ENCODE measurements at regions of chr22 and their contacts with region 1.

Region 1: DNA sequence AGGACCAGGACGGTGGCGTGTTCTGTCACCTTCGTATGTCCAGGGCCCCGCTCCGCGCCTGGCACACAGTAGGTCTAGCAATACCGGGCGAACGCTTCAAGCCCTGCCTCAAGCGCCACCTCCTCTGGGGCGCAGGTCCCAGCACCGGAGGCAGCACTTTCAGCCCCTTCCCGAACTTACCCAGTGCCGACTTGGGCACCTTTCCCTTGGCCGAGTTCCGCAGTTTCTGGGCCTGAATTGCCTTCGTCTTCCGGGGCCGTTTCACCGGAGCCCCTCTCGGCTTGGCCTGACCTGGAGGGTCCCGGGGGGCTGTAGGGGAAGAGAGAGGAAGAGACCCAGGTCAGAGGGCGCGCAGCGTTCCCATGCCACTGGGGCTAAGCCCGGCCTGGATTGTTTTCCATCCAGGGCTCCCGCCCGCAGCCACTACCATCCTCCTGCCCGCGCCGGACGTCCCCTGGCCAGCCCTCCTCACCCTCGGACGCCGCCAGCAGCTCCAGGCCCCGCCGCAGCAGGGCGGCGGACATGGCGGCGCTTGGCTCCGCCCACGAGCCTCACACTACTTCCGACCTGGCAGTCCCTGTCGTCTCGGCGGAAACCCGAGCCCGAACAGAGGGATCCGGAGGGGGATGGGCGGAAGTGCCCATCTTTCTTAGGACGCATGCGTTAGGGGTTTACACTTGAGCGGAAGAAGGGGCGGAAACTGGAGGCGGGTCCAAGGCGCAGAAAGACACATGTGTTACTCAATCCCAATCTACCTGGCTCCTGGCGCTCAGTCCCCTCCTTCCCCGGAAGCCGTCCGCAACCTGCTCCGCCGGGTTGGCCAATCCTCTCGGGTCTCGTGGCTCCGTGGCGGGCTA is at the start of gene RPS19BP1:
- DNase-seq: peak; percentile 85 to 99
- ATAC-seq: peak; percentile 67 to 78
- H3K4me3 ChIP-seq: peak within 1 kb of the TSS; percentile 98
- H3K27ac ChIP-seq: peak within 1 kb of the TSS; percentile 97 to 98
- H3K4me1 ChIP-seq: peaks cover 33% of the 10 kb centered on the region
- CTCF ChIP-seq: no peak
- EP300 ChIP-seq: no peak
- POLR2A ChIP-seq: peak; percentile 83
- RAD21 ChIP-seq: no peak
- polyA plus RNA-seq, gene RPS19BP1: 47.9 and 51.1 TPM in 2 replicates

Region 2: GRCh38 chr22:39490135-39490798 is 42.2 kb before region 1 on chr22:
- CTCF ChIA-PET with region 1: interaction called, 80 read pairs
- POLR2A ChIA-PET with region 1: no interaction called
- DNase-seq: peak; percentile 74 to 87
- ATAC-seq: peak; percentile 88 to 96
- H3K4me3 ChIP-seq: no peak overlapping the region
- H3K27ac ChIP-seq: no peak overlapping the region
- H3K4me1 ChIP-seq: no peaks in the 10 kb centered on the region
- CTCF ChIP-seq: no peak
- EP300 ChIP-seq: no peak
- POLR2A ChIP-seq: no peak
- RAD21 ChIP-seq: no peak

Region 3: GRCh38 chr22:39514373-39514973 is 18.0 kb before region 1 on chr22:
- CTCF ChIA-PET with region 1: interaction called, 37 read pairs
- POLR2A ChIA-PET with region 1: interaction called, 34 read pairs
- DNase-seq: peak in 1 of 2 experiments; percentile 31
- ATAC-seq: peak; percentile 37 to 61; a peak in 4 of 6 replicates
- H3K4me3 ChIP-seq: no peak overlapping the region
- H3K27ac ChIP-seq: no peak overlapping the region
- H3K4me1 ChIP-seq: peaks cover 10% of the 10 kb centered on the region
- CTCF ChIP-seq: peak; percentile 62
- EP300 ChIP-seq: no peak
- POLR2A ChIP-seq: no peak
- RAD21 ChIP-seq: 0 out of 5 replicates have a peak, but pooled peaks have one; percentile 13 to 14

Region 4: DNA sequence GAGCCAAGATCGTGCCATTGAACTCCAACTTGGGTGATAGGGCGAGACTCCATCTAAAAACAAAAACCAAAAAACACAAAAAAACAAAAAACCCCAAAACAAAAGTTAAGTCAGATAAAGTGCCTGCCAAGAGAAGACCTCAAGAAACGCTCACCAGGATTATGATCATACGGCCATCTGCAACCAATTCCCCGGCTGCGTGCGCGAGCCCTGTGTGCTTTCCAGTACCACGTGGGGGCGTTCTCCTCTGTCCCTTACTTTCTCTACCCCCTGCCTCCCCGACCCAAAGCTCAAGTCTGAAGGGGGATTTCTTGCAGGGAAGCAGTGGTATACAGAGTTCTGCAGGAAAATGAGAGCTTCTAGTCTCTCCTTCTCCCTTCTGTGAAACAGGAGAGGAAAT is 10.7 kb after region 1 on chr22:
- CTCF ChIA-PET with region 1: interaction called, 23 read pairs
- POLR2A ChIA-PET with region 1: no interaction called
- DNase-seq: peak; percentile 33 to 35
- ATAC-seq: peak in 1 of 2 experiments; percentile 81; a peak in 4 of 6 replicates
- H3K4me3 ChIP-seq: no peak overlapping the region
- H3K27ac ChIP-seq: no peak overlapping the region
- H3K4me1 ChIP-seq: no peaks in the 10 kb centered on the region
- CTCF ChIP-seq: peak; percentile 31; the same call in 2 of the 3 replicates
- EP300 ChIP-seq: no peak
- POLR2A ChIP-seq: no peak
- RAD21 ChIP-seq: peak; percentile 39 to 56; a peak in 4 of 5 replicates

Region 5: GRCh38 chr22:39574779-39575551 is 42.5 kb after region 1 on chr22:
- CTCF ChIA-PET with region 1: interaction called, 16 read pairs
- POLR2A ChIA-PET with region 1: no interaction called
- DNase-seq: peak; percentile 54 to 78
- ATAC-seq: peak; percentile 75 to 87
- H3K4me3 ChIP-seq: no peak overlapping the region
- H3K27ac ChIP-seq: peak overlapping the region; percentile 55 to 80
- H3K4me1 ChIP-seq: peaks cover 18% of the 10 kb centered on the region
- CTCF ChIP-seq: no peak
- EP300 ChIP-seq: no peak
- POLR2A ChIP-seq: no peak
- RAD21 ChIP-seq: no peak

Region 6: GRCh38 chr22:39643311-39644083 is 111.1 kb after region 1 on chr22:
- CTCF ChIA-PET with region 1: no interaction called
- POLR2A ChIA-PET with region 1: no interaction called
- DNase-seq: no peak
- ATAC-seq: no peak
- H3K4me3 ChIP-seq: no peak overlapping the region
- H3K27ac ChIP-seq: no peak overlapping the region
- H3K4me1 ChIP-seq: no peaks in the 10 kb centered on the region
- CTCF ChIP-seq: no peak
- EP300 ChIP-seq: no peak
- POLR2A ChIP-seq: no peak
- RAD21 ChIP-seq: no peak

Region 7: GRCh38 chr22:40346178-40347118 is 814.0 kb after region 1 on chr22 and contains the start of gene ADSL:
- CTCF ChIA-PET with region 1: interaction called, 14 read pairs
- POLR2A ChIA-PET with region 1: no interaction called
- DNase-seq: peak; percentile 82
- ATAC-seq: peak; percentile 98
- H3K4me3 ChIP-seq: peak within 1 kb of the TSS; percentile 72
- H3K27ac ChIP-seq: peak within 1 kb of the TSS; percentile 87 to 97
- H3K4me1 ChIP-seq: peaks cover 20% of the 10 kb centered on the region
- CTCF ChIP-seq: no peak
- EP300 ChIP-seq: no peak
- POLR2A ChIP-seq: peak; percentile 95
- RAD21 ChIP-seq: no peak
- polyA plus RNA-seq, gene ADSL: 126 TPM in 2 replicates

Measured in A549 (cell line).